ENCODE measurements at regions of chr19 and their contacts with region 1.

Region 1: GRCh38 chr19:48588670-48589399 is 17.7 kb upstream of the SPACA4 start:
- DNase-seq: peak; percentile 97
- H3K4me3 ChIP-seq: peak overlapping the region; percentile 23
- H3K27ac ChIP-seq: no peak overlapping the region
- H3K4me1 ChIP-seq: no peaks in the 10 kb centered on the region
- H3K27me3 ChIP-seq: no peaks in the 10 kb centered on the region
- CTCF ChIP-seq: peak; percentile 89

Region 2: DNA sequence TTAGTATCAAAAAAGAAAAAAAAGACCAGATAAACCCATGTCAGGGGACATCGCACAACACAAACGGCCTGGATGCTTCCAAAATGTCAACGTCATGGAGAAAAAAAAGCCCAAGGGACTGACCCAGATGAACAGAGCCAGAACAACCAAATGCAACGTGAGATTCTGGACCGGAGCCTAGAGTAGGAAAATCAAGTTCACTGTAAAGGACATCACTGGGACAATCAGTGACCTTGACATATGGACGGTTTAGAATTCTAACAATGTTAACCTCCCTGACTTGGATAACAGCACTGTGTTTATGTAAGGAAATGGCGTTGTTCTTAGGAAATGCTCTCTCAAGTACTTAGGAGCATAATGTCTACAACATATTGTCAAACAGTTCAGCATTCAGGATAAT is 278.6 kb before region 1 on chr19:
- intact Hi-C with region 1: loop called (anchors 10 kb)
- DNase-seq: no peak
- H3K4me3 ChIP-seq: no peak overlapping the region
- H3K27ac ChIP-seq: no peak overlapping the region
- H3K4me1 ChIP-seq: no peaks in the 10 kb centered on the region
- H3K27me3 ChIP-seq: no peaks in the 10 kb centered on the region
- CTCF ChIP-seq: no peak

Region 3: DNA sequence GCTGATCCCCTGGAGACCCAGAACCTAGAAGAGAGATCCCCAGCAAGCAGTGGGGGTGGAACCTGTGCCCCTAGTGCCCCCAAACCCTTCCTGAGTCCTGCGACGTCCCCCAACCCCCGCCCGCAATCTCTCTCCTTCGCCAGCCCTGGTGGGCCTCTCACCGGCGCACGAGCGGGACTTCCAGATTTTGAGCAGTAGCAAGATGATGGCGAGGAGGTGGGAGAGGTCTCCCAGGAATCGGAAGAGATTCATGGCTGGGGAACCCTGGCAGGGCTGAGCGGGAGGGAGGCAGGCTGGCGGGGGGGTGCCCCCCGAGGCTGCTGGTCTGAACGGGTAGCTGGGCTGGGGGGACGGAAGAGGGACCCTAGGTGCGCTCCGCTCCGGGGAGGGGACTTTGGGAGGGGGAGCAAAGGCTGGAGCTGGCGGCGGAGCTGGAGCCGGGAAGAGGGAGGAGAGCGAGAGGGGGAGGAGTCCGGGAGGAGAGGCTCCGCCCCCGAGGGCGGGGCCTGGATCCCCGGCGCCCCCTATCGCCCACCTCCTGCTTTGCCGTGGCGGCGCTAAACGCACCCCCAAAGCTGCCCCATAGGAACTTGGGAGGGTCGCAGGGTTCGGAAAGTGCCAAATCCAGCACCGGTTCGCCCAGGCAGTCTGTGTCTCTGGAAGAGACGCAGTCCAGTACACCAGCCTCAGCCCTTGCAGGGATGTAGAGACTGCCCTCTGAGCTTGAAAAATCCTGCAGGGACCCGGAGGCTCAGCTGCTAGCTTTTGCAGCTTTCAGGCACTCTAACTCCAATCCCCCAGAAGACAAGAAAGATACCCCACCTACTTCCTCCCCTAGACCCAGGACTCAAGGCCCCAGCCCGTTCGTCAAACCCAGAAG is 197.5 kb before region 1 on chr19 and contains the start of gene KDELR1:
- intact Hi-C with region 1: loop called (anchors 10 kb)
- DNase-seq: peak; percentile 82
- H3K4me3 ChIP-seq: peak within 1 kb of the TSS; percentile 98
- H3K27ac ChIP-seq: peak within 1 kb of the TSS; percentile 89
- H3K4me1 ChIP-seq: no peaks in the 10 kb centered on the region
- H3K27me3 ChIP-seq: peaks cover 40% of the 10 kb centered on the region
- CTCF ChIP-seq: peak; percentile 83
- total RNA-seq, gene KDELR1: 233 to 249 TPM

Region 4: GRCh38 chr19:48489608-48490216 is 99.1 kb before region 1 on chr19:
- intact Hi-C with region 1: loop called (anchors 5 kb)
- DNase-seq: peak; percentile 86
- H3K4me3 ChIP-seq: no peak overlapping the region
- H3K27ac ChIP-seq: no peak overlapping the region
- H3K4me1 ChIP-seq: peaks cover 12% of the 10 kb centered on the region
- H3K27me3 ChIP-seq: peaks cover 3% of the 10 kb centered on the region
- CTCF ChIP-seq: peak; percentile 98

Region 5: DNA sequence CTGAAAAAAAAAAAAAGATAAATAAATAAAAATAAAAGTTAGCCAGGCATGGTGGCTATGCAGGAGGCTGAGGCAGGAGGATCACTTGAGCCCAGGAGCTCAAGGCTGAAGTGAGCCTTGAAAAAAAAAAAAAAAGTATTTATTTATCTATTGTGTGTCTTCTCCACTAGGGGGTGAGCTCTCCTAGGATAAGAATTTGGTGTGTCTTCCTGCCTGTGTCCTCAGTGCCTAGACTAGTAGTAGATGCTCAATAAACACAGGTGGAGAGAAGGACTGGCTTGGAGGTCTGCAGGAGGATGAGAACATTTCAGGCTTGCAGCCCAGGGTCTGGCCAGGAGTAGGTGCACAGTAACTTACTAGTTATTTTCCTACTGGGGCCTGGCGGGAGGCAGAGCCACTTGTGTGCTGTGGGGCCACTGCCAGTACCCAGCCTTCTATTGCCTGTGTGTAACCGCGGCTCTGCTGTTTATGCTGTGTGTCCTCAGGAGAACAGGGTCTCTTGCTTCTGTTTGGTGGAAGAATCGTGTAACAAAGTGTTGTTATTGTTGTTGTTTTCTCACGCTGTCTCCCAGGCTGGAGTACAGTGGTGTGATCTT is 82.6 kb before region 1 on chr19:
- intact Hi-C with region 1: loop called (anchors 2 kb)
- DNase-seq: no peak
- H3K4me3 ChIP-seq: no peak overlapping the region
- H3K27ac ChIP-seq: no peak overlapping the region
- H3K4me1 ChIP-seq: no peaks in the 10 kb centered on the region
- H3K27me3 ChIP-seq: peaks cover 8% of the 10 kb centered on the region
- CTCF ChIP-seq: peak; percentile 32

Region 6: DNA sequence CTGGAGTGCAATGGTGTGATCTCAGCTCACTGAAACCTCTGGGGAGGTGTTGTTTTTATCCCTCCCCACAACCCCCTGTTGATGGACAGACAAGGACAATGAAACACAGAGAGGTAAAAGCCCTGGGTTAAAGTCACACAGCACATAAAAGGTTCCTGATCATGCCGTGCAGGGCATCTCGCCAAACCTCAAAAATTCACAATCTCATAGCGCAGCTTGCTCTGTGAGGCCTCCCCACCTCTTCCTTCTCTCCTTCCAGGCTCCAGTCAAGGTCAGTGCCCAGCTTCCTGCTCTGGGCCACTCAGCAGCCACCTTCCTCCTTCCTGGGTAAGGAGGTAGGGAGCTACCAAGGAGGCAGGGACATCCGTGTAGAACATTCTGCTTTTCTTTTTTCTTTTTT is 109.2 kb after region 1 on chr19:
- intact Hi-C with region 1: no loop called
- DNase-seq: peak; percentile 88
- H3K4me3 ChIP-seq: no peak overlapping the region
- H3K27ac ChIP-seq: peak overlapping the region; percentile 10
- H3K4me1 ChIP-seq: no peaks in the 10 kb centered on the region
- H3K27me3 ChIP-seq: no peaks in the 10 kb centered on the region
- CTCF ChIP-seq: no peak

Region 7: GRCh38 chr19:48872182-48872883 is 283.5 kb after region 1 on chr19 and contains the start of gene PPP1R15A:
- intact Hi-C with region 1: no loop called
- DNase-seq: peak; percentile 99
- H3K4me3 ChIP-seq: peak within 1 kb of the TSS; percentile 63
- H3K27ac ChIP-seq: peak within 1 kb of the TSS; percentile 97
- H3K4me1 ChIP-seq: peaks cover 15% of the 10 kb centered on the region
- H3K27me3 ChIP-seq: no peaks in the 10 kb centered on the region
- CTCF ChIP-seq: no peak
- total RNA-seq, gene PPP1R15A: 23.9 to 33.3 TPM